Dendritic cell treated with granulocyte-macrophage colony-stimulating factor and Interleukin-4, amounts not matched to agents 40 ng/mL and 50 ng/mL, for 4 days (primary cell): ENCODE measurements at regions of chr4 and their contacts with region 1.

Region 1: DNA sequence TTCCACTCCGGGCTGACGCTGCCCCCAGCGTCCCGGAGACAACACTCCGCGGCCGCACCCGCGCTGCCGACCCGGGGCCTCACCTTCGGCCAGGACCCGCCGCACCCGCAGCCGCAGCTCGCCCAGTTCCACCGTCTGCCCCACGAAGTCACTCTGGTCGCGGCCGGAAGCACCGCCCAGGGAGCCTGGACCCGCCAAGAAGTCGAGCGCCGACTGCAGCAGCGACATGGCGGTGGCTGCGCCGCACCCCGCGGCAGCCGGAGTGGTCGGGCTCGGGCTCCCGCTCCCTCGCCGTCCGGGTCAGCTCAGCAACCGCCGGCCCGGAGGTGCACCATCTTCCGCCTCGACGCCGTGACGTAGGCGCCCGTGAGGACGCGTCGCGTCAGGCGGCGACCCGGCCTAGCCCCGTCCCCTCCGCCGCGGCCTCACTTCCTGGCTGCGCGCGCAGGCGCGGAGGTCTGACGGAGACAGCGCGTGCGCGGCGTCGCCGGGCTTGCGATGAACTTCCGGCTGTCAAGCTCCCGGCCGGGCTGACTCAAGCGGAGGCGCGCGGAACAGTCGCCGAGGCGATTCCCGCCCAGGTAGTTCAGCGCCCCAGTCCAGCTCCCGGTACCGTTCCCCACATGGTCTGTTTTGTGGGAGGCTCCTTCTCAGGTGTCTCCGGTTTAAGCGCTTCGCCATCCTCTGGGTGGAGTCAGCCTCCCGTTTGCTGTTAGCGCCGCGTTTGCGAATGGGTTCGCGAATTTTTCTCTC is at the starts of genes GAK and TMEM175:
- H3K4me3 Mint-ChIP-seq: peak within 1 kb of the TSS; percentile 97
- H3K27ac Mint-ChIP-seq: peak within 1 kb of the TSS; percentile 97
- H3K4me1 Mint-ChIP-seq: peaks cover 68% of the 10 kb centered on the region
- H3K27me3 Mint-ChIP-seq: no peaks in the 10 kb centered on the region

Region 2: DNA sequence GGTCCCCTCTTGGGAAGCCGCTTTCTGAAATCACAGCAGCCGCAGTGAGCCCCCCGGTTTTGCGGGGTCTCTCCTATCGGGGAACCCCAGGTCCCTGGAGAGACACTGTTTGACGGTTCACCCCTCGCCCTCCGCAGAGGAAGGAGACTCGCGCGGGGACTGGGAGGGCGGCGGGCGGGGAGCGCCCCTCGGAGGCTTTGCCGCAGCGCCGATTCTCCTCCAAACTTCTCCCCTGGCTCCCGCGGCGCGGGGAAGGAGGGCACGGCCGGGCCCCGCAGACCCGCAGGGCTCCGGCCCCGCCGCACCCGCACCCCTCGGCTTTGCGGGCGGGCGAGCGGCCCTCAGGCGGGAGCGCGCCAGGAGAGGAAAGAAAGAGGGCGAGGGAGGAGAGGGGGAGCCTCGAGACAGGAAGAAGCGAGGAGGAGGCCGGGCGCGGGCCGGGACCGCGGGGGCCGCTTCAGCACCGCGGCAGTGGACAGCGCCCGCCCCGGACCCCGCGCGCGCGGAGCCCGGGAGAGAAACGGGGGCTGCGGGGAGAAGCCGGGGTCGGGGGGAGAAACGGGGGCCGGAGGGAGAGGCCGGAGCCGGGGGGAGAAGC is 106.8 kb before region 1 on chr4:
- intact Hi-C with region 1: no loop called
- H3K4me3 Mint-ChIP-seq: peak overlapping the region; percentile 21
- H3K27ac Mint-ChIP-seq: no peak overlapping the region
- H3K4me1 Mint-ChIP-seq: no peaks in the 10 kb centered on the region
- H3K27me3 Mint-ChIP-seq: peaks cover 80% of the 10 kb centered on the region

Region 3: DNA sequence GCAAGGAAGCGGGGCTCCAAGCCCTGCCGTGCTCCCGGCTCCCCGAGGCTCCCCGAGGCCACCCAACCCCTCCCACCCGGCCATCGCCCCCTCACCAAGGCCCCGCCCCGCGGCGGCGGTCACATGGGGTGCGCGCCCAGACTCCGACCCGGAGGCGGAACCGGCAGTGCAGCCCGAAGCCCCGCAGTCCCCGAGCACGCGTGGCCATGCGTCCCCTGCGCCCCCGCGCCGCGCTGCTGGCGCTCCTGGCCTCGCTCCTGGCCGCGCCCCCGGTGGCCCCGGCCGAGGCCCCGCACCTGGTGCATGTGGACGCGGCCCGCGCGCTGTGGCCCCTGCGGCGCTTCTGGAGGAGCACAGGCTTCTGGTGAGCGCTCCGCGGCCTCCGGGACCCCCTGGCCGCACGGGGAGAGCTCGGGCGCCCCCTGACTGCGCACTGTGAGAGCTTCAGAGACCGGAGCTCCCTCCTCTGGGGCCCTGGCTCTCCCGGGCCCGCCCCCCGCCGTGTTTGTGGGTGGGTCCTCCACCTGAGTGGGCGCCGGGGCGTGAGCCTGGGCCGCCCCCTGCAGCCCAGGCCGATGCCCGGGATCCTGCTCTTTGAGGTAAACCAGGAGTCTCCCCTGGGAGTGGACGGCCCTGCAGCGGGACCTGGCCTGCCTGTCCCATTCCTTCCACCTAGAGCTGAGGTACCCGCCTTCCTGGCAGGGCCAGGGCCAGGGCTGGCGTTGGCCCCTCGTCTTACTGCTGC is 54.9 kb after region 1 on chr4 and contains the start of gene IDUA:
- intact Hi-C with region 1: loop called (anchors 5 kb)
- H3K4me3 Mint-ChIP-seq: peak within 1 kb of the TSS; percentile 82
- H3K27ac Mint-ChIP-seq: peak within 1 kb of the TSS; percentile 83
- H3K4me1 Mint-ChIP-seq: peaks cover 36% of the 10 kb centered on the region
- H3K27me3 Mint-ChIP-seq: peaks cover 1% of the 10 kb centered on the region